Psoas muscle (tissue), 8 donors: ENCODE measurements at regions of chr12 and their contacts with region 1.

Region 1: DNA sequence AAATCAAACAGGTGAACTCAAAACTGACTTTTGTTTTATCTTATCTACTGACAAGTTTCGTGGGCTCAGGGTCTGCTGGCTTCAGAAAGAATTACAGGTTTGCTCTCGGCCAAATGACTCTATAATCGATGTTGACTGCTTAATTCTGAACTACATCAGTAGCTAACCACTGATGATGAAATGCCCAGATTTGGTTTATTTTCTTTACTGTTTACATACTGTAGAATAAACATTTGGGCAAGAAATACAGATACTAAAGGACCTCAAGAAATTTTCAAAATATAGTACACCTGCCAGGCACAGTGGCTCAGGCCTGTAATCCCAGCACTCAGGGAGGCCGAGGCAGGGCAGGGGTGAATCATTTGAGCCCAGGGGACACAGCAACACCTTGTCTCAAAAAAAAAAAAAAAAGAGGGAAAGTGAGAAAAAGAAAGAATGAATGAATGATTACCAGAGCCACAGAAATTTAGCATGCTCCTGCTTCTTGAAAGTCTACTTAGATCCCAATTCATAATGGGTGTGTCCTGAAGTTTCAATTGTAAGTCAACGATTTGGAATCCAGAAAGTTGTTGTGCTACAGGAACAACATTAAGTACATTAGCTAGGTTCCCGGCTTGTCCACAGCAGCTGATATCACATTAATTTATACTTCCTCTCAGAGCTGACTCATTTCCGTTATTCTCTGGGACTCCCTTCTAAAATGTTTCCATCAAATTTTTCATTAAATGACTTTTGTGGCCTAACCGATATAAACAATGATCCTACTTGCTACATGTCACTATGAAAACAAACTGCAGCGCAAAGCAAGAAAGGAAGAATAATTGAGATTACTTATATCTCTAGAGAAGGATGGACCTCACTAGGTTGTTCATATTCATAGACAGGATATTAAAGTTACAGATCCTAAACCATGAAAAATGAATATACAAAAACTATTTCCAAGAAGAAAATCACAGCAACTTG is 134.3 kb downstream of the MED13L start:
- DNase-seq: no peak
- ATAC-seq: no peak
- H3K4me3 ChIP-seq: peak overlapping the region; percentile 0
- H3K27ac ChIP-seq: peak overlapping the region; percentile 75
- H3K4me1 ChIP-seq: peaks cover 60% of the 10 kb centered on the region
- H3K27me3 ChIP-seq: no peaks in the 10 kb centered on the region
- CTCF ChIP-seq: no peak

Region 2: GRCh38 chr12:115776399-115776798 is 366.8 kb before region 1 on chr12:
- intact Hi-C with region 1: no loop called
- DNase-seq: no peak
- ATAC-seq: no peak
- H3K4me3 ChIP-seq: no peak overlapping the region
- H3K27ac ChIP-seq: no peak overlapping the region
- H3K4me1 ChIP-seq: no peaks in the 10 kb centered on the region
- H3K27me3 ChIP-seq: peaks cover 0 to 3% (median 3%) of the 10 kb centered on the region in 3 donors
- CTCF ChIP-seq: no peak

Region 3: GRCh38 chr12:116194935-116195431 is 51.8 kb after region 1 on chr12:
- intact Hi-C with region 1: loop called in 1 of 2 experiments (anchors 10 kb)
- DNase-seq: no peak
- ATAC-seq: peak in 2 of 4 donors; percentile 51 to 60
- H3K4me3 ChIP-seq: no peak overlapping the region
- H3K27ac ChIP-seq: no peak overlapping the region
- H3K4me1 ChIP-seq: peaks cover 76% of the 10 kb centered on the region
- H3K27me3 ChIP-seq: no peaks in the 10 kb centered on the region
- CTCF ChIP-seq: no peak

Region 4: GRCh38 chr12:116303929-116304328 is 160.7 kb after region 1 on chr12:
- intact Hi-C with region 1: no loop called
- DNase-seq: no peak
- ATAC-seq: peak in 3 of 4 donors; percentile 60 to 72 (median 65)
- H3K4me3 ChIP-seq: no peak overlapping the region
- H3K27ac ChIP-seq: no peak overlapping the region
- H3K4me1 ChIP-seq: no peaks in the 10 kb centered on the region
- H3K27me3 ChIP-seq: no peaks in the 10 kb centered on the region
- CTCF ChIP-seq: no peak